Activated naive CD4-positive, alpha-beta T cell treated with anti-CD3 and anti-CD28 coated beads for 36 hours (primary cell): ENCODE measurements at regions of chr15 and their contacts with region 1.

Region 1: DNA sequence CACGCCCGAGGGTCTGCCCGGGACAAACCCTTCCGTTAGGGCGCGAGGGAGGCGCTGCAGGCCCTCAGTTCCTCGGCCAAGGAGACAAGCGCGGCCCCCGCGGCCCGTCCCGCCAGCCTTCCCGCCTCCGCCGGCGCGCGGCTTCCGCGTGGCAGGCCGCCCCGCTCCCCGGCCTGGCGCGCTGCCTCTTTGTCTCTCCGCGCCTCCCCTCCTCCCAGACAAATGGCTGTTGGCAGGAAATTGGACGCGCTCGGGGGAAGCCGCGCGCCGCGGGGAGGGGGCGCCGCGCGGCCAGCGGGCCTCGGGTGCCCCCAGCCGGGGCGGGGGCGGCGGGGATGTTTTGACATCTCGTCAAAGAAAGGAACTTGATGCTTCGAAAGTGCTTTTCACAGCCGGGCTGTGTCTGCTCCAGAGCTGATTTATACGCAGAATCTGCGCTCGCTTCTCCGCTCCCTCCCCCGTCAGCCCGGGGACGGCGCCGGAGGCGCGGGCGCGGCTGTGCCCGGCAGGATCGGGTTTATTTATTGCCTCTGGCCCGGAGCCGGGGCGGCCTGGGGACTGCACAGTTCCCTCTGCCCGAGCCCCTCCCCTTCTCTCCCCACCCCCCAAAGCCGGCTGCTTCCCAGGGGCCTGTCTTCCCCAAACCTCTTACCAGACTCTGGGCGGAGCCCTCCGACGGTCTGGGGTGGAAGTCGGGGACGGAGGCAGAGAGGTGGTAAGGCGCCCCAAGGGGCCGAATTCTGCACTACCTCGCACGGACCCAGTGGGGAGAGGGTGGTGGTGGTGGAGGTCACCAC is 20.7 kb downstream of the SHF start:
- DNase-seq: peak; percentile 89
- H3K4me3 Mint-ChIP-seq: peak overlapping the region; percentile 69
- H3K27ac Mint-ChIP-seq: peak overlapping the region; percentile 66
- H3K4me1 Mint-ChIP-seq: peaks cover 10% of the 10 kb centered on the region
- H3K27me3 Mint-ChIP-seq: no peaks in the 10 kb centered on the region

Region 2: GRCh38 chr15:45091161-45091560 is 75.9 kb before region 1 on chr15:
- CTCF ChIA-PET with region 1: no interaction called
- intact Hi-C with region 1: no loop called
- DNase-seq: no peak
- H3K4me3 Mint-ChIP-seq: no peak overlapping the region
- H3K27ac Mint-ChIP-seq: no peak overlapping the region
- H3K4me1 Mint-ChIP-seq: no peaks in the 10 kb centered on the region
- H3K27me3 Mint-ChIP-seq: peaks cover 7% of the 10 kb centered on the region

Region 3: GRCh38 chr15:45126535-45127158 is 40.4 kb before region 1 on chr15:
- CTCF ChIA-PET with region 1: interaction called, 7 read pairs
- intact Hi-C with region 1: loop called (anchors 2 kb)
- DNase-seq: peak; percentile 62
- H3K4me3 Mint-ChIP-seq: no peak overlapping the region
- H3K27ac Mint-ChIP-seq: no peak overlapping the region
- H3K4me1 Mint-ChIP-seq: peaks cover 4% of the 10 kb centered on the region
- H3K27me3 Mint-ChIP-seq: peaks cover 47% of the 10 kb centered on the region

Region 4: GRCh38 chr15:45179221-45179985 is 12.4 kb after region 1 on chr15:
- CTCF ChIA-PET with region 1: interaction called, 32 read pairs
- intact Hi-C with region 1: no loop called
- DNase-seq: peak; percentile 58
- H3K4me3 Mint-ChIP-seq: no peak overlapping the region
- H3K27ac Mint-ChIP-seq: no peak overlapping the region
- H3K4me1 Mint-ChIP-seq: peaks cover 5% of the 10 kb centered on the region
- H3K27me3 Mint-ChIP-seq: no peaks in the 10 kb centered on the region

Region 5: GRCh38 chr15:45187894-45188830 is 21.1 kb after region 1 on chr15 and contains the start of gene SHF:
- CTCF ChIA-PET with region 1: interaction called, 26 read pairs
- intact Hi-C with region 1: loop called (anchors 1 kb)
- DNase-seq: peak; percentile 83
- H3K4me3 Mint-ChIP-seq: peak within 1 kb of the TSS; percentile 87
- H3K27ac Mint-ChIP-seq: peak within 1 kb of the TSS; percentile 91
- H3K4me1 Mint-ChIP-seq: peaks cover 22% of the 10 kb centered on the region
- H3K27me3 Mint-ChIP-seq: no peaks in the 10 kb centered on the region
- total RNA-seq, gene SHF: 2.3 to 3.3 TPM

Region 6: DNA sequence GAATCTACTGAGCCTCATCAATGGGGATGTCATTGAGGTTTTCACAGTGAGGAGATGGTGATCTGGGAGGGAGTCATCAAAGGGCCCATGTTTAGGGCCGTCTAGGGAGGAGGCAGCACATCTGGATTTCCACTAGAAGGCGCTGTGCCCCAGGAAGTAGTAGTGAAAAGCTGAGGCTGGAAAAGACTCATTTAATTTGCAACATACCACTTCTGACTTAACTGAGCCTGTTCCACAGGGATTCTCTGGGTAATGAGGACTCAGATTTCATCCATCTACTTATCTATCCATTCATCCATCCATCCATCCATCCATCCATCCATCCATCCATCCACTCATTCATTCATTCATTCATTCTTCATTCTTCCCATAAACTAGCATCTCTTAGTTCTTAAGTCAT is 38.2 kb after region 1 on chr15:
- CTCF ChIA-PET with region 1: interaction called, 39 read pairs
- intact Hi-C with region 1: no loop called
- DNase-seq: peak; percentile 86
- H3K4me3 Mint-ChIP-seq: no peak overlapping the region
- H3K27ac Mint-ChIP-seq: no peak overlapping the region
- H3K4me1 Mint-ChIP-seq: peaks cover 3% of the 10 kb centered on the region
- H3K27me3 Mint-ChIP-seq: peaks cover 4% of the 10 kb centered on the region

Region 7: GRCh38 chr15:45279024-45279698 is 112.1 kb after region 1 on chr15:
- CTCF ChIA-PET with region 1: interaction called, 11 read pairs
- intact Hi-C with region 1: loop called (anchors 1 kb)
- DNase-seq: peak; percentile 96
- H3K4me3 Mint-ChIP-seq: peak overlapping the region; percentile 81
- H3K27ac Mint-ChIP-seq: peak overlapping the region; percentile 52
- H3K4me1 Mint-ChIP-seq: peaks cover 17% of the 10 kb centered on the region
- H3K27me3 Mint-ChIP-seq: no peaks in the 10 kb centered on the region